ENCODE measurements at regions of chr11 and their contacts with region 1.

Region 1: GRCh38 chr11:18526521-18527296 is at the start of gene TSG101:
- DNase-seq: peak; percentile 90 to 96 (median 93)
- H3K4me3 ChIP-seq: peak within 1 kb of the TSS; percentile 95
- H3K4me3 Mint-ChIP-seq: peak within 1 kb of the TSS; percentile 96 to 100 (median 99)
- H3K27ac ChIP-seq: peak within 1 kb of the TSS; percentile 99
- H3K27ac Mint-ChIP-seq: peak within 1 kb of the TSS; percentile 100
- H3K4me1 ChIP-seq: peaks cover 20% of the 10 kb centered on the region
- H3K4me1 Mint-ChIP-seq: peaks cover 46 to 64% (median 61%) of the 10 kb centered on the region in 3 donors
- H3K27me3 ChIP-seq: no peaks in the 10 kb centered on the region
- H3K27me3 Mint-ChIP-seq: peaks cover 0 to 4% of the 10 kb centered on the region in 2 donors
- total RNA-seq, gene TSG101: 44.8 to 45.4 TPM

Region 2: DNA sequence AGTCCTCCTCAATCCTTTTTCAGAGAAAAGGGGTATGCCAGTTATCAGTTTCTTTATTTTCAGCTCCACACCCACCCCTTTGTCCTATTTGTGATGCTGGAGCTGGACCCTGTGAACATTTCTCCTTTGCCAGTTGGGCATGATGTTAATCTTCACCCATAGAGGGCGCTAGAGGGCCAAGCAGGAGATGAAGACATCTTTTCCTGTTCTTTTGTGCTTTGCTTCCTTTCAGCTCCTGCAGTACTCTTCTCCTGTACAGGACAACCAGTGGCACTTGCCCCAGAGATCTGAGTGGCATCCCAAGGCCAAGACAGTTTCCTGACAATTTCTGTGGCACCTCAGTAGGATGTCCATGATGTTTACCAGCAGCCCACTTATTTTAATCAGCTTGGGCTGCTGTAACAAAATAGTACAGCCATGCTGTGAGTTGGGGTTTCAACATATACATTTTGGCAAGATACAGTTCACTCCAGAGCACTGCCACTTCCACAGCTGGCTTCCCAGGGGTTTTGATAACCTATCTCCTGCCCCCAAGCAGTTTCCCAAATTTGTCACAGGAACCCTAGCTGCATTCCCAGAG is 282.8 kb before region 1 on chr11:
- CTCF ChIA-PET with region 1: interaction called, 11 read pairs
- POLR2A ChIA-PET with region 1: no interaction called
- DNase-seq: peak; percentile 33 to 78 (median 49)
- H3K4me3 ChIP-seq: no peak overlapping the region
- H3K4me3 Mint-ChIP-seq: peak overlapping the region in 2 of 7 donors; percentile 6 to 28
- H3K27ac ChIP-seq: no peak overlapping the region
- H3K27ac Mint-ChIP-seq: peak overlapping the region in 6 of 8 donors; percentile 6 to 81 (median 53)
- H3K4me1 ChIP-seq: no peaks in the 10 kb centered on the region
- H3K4me1 Mint-ChIP-seq: peaks cover 15 to 25% (median 17%) of the 10 kb centered on the region in 3 donors
- H3K27me3 ChIP-seq: peaks cover 9% of the 10 kb centered on the region
- H3K27me3 Mint-ChIP-seq: peaks cover 8 to 10% of the 10 kb centered on the region in 2 donors

Region 3: GRCh38 chr11:18321980-18322711 is 204.6 kb before region 1 on chr11 and contains the starts of genes GTF2H1 and HPS5:
- CTCF ChIA-PET with region 1: interaction called, 3 read pairs
- POLR2A ChIA-PET with region 1: interaction called, 12 read pairs
- DNase-seq: peak; percentile 92 to 98 (median 96)
- H3K4me3 ChIP-seq: peak within 1 kb of the TSS; percentile 81
- H3K4me3 Mint-ChIP-seq: peak within 1 kb of the TSS; percentile 89 to 100 (median 99)
- H3K27ac ChIP-seq: peak within 1 kb of the TSS; percentile 99
- H3K27ac Mint-ChIP-seq: peak within 1 kb of the TSS; percentile 97 to 100 (median 100)
- H3K4me1 ChIP-seq: peaks cover 51% of the 10 kb centered on the region
- H3K4me1 Mint-ChIP-seq: peaks cover 69 to 88% (median 84%) of the 10 kb centered on the region in 3 donors
- H3K27me3 ChIP-seq: no peaks in the 10 kb centered on the region
- H3K27me3 Mint-ChIP-seq: no peaks in the 10 kb centered on the region
- total RNA-seq, gene GTF2H1: 60.3 to 62.0 TPM
- total RNA-seq, gene HPS5: 18.5 to 19.4 TPM

Region 4: GRCh38 chr11:18395735-18396504 is 130.8 kb before region 1 on chr11:
- CTCF ChIA-PET with region 1: interaction called, 4 read pairs
- POLR2A ChIA-PET with region 1: interaction called, 24 read pairs
- DNase-seq: peak; percentile 88 to 97 (median 96)
- H3K4me3 ChIP-seq: peak overlapping the region; percentile 91
- H3K4me3 Mint-ChIP-seq: peak overlapping the region; percentile 97 to 99 (median 98)
- H3K27ac ChIP-seq: peak overlapping the region; percentile 89
- H3K27ac Mint-ChIP-seq: peak overlapping the region; percentile 89 to 100 (median 98)
- H3K4me1 ChIP-seq: peaks cover 22% of the 10 kb centered on the region
- H3K4me1 Mint-ChIP-seq: peaks cover 33 to 56% (median 45%) of the 10 kb centered on the region in 3 donors
- H3K27me3 ChIP-seq: no peaks in the 10 kb centered on the region
- H3K27me3 Mint-ChIP-seq: peaks cover 0 to 12% of the 10 kb centered on the region in 2 donors

Region 5: DNA sequence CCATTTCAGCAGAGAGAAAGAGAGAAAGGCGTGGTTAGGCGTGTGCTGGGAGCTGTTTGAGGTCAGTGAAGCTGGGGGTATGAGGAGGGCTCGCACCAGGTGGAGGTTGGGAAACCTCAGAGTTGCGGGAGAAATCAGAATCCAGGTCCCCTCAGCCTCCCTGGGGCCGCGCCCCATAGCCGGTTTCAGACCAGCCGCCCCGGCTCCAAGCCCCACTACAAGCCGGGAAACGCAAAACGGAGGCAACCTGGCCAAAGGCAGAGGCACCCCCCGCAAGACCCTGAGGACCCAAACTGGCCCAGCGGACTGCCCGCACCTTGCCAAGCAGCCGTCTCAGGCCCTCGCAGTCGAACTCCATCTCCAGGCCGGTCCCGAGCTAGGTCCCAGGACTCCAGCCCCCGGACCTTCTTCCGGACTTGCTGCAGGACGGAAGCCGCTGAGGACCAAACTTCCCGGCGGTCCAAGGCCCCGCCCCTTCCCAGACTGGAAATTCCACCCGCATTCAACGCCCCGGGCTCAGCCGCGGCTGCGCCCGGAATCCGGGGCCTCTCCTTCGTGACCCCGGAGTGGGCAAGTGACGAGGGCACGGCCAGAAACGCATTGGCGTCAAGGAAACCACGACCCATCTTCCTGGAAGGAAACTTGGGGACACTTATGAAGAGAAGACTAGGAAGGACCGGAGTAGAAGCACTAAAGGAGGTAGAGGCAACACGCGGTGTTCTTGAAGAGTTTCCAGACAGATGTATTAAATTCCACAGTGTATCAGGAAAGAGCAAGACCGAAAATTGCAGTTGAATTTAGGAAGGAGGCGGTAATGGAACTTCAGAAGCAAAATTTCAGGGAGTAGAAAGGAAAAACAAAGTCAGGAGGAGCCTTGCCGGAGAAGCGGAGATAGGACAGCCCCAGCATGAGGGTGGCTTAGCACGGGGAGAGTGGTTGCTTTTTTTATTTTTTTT is 61.9 kb after region 1 on chr11 and contains the start of gene UEVLD:
- CTCF ChIA-PET with region 1: interaction called, 5 read pairs
- POLR2A ChIA-PET with region 1: interaction called, 11 read pairs
- DNase-seq: peak; percentile 43 to 75 (median 63)
- H3K4me3 ChIP-seq: peak within 1 kb of the TSS; percentile 79
- H3K4me3 Mint-ChIP-seq: no peak within 1 kb of the TSS
- H3K27ac ChIP-seq: peak within 1 kb of the TSS; percentile 83
- H3K27ac Mint-ChIP-seq: no peak within 1 kb of the TSS
- H3K4me1 ChIP-seq: peaks cover 24% of the 10 kb centered on the region
- H3K4me1 Mint-ChIP-seq: peaks cover 0 to 9% (median 0%) of the 10 kb centered on the region in 3 donors
- H3K27me3 ChIP-seq: no peaks in the 10 kb centered on the region
- H3K27me3 Mint-ChIP-seq: no peaks in the 10 kb centered on the region
- total RNA-seq, gene UEVLD: 15.6 to 16.6 TPM

Region 6: GRCh38 chr11:18634140-18635032 is 107.7 kb after region 1 on chr11 and contains the start of gene SPTY2D1:
- CTCF ChIA-PET with region 1: no interaction called
- POLR2A ChIA-PET with region 1: interaction called, 16 read pairs
- DNase-seq: peak; percentile 94 to 99 (median 98)
- H3K4me3 ChIP-seq: peak within 1 kb of the TSS; percentile 99
- H3K4me3 Mint-ChIP-seq: peak within 1 kb of the TSS; percentile 90 to 99 (median 96)
- H3K27ac ChIP-seq: peak within 1 kb of the TSS; percentile 93
- H3K27ac Mint-ChIP-seq: peak within 1 kb of the TSS; percentile 96 to 100 (median 98)
- H3K4me1 ChIP-seq: peaks cover 17% of the 10 kb centered on the region
- H3K4me1 Mint-ChIP-seq: peaks cover 27 to 39% (median 38%) of the 10 kb centered on the region in 3 donors
- H3K27me3 ChIP-seq: no peaks in the 10 kb centered on the region
- H3K27me3 Mint-ChIP-seq: peaks cover 4 to 5% of the 10 kb centered on the region in 2 donors
- total RNA-seq, gene SPTY2D1: 23.7 to 27.3 TPM

Measured in CD8-positive, alpha-beta memory T cell (primary cell).